GM12878 (cell line): ENCODE measurements at regions of chr11 and their contacts with region 1.

Region 1: GRCh38 chr11:118895142-118896039 is 11.7 kb downstream of the CXCR5 start:
- DNase-seq: peak; percentile 47
- ATAC-seq: peak; percentile 85
- H3K4me3 ChIP-seq: no peak overlapping the region
- H3K27ac ChIP-seq: no peak overlapping the region; the same call in 1 of the 2 replicates
- H3K4me1 ChIP-seq: peaks cover 44% of the 10 kb centered on the region
- H3K27me3 ChIP-seq: no peaks in the 10 kb centered on the region
- CTCF ChIP-seq: peak in 1 of 3 experiments; percentile 34; a peak in 2 of 6 replicates
- EP300 ChIP-seq: 0 out of 4 replicates have a peak, but pooled peaks of 1 of the 2 experiments have one; percentile 18
- POLR2A ChIP-seq: peak; percentile 34; the same call in 1 of the 2 replicates
- RAD21 ChIP-seq: peak; percentile 20; the same call in 1 of the 2 replicates

Region 2: GRCh38 chr11:118659314-118659952 is 236.0 kb before region 1 on chr11:
- CTCF ChIA-PET with region 1: no interaction called
- POLR2A ChIA-PET with region 1: no interaction called
- RAD21 ChIA-PET with region 1: no interaction called
- SMC1A ChIA-PET with region 1: no interaction called
- in situ Hi-C with region 1: no loop called
- intact Hi-C with region 1: no loop called
- DNase-seq: peak; percentile 2
- ATAC-seq: peak; percentile 98
- H3K4me3 ChIP-seq: no peak overlapping the region
- H3K27ac ChIP-seq: no peak overlapping the region
- H3K4me1 ChIP-seq: no peaks in the 10 kb centered on the region
- H3K27me3 ChIP-seq: peaks cover 0 to 4% of the 10 kb centered on the region in 2 experiments; a peak in 3 of 4 replicates
- CTCF ChIP-seq: peak; percentile 86 to 96 (median 94); a peak in 5 of 6 replicates
- EP300 ChIP-seq: no peak
- POLR2A ChIP-seq: no peak
- RAD21 ChIP-seq: peak; percentile 57

Region 3: GRCh38 chr11:118679483-118679882 is 215.9 kb before region 1 on chr11 and contains the start of gene TREH:
- CTCF ChIA-PET with region 1: no interaction called
- POLR2A ChIA-PET with region 1: no interaction called
- RAD21 ChIA-PET with region 1: no interaction called
- SMC1A ChIA-PET with region 1: no interaction called
- in situ Hi-C with region 1: no loop called
- intact Hi-C with region 1: no loop called
- DNase-seq: no peak
- ATAC-seq: no peak
- H3K4me3 ChIP-seq: no peak within 1 kb of the TSS
- H3K27ac ChIP-seq: no peak within 1 kb of the TSS
- H3K4me1 ChIP-seq: no peaks in the 10 kb centered on the region
- H3K27me3 ChIP-seq: 0 out of 4 replicates have a peak, but pooled peaks cover 0 to 1% of the 10 kb centered on the region in 2 experiments
- CTCF ChIP-seq: no peak
- EP300 ChIP-seq: no peak
- POLR2A ChIP-seq: no peak
- RAD21 ChIP-seq: no peak
- polyA plus RNA-seq, gene TREH: not detected

Region 4: GRCh38 chr11:118838905-118839553 is 56.4 kb before region 1 on chr11:
- CTCF ChIA-PET with region 1: interaction called, 4 read pairs
- POLR2A ChIA-PET with region 1: no interaction called
- RAD21 ChIA-PET with region 1: interaction called, 12 read pairs
- SMC1A ChIA-PET with region 1: interaction called, 10 read pairs
- in situ Hi-C with region 1: no loop called
- intact Hi-C with region 1: no loop called
- DNase-seq: peak; percentile 85
- ATAC-seq: peak; percentile 87
- H3K4me3 ChIP-seq: no peak overlapping the region; the same call in 1 of the 2 replicates
- H3K27ac ChIP-seq: peak overlapping the region; percentile 24; the same call in 1 of the 2 replicates
- H3K4me1 ChIP-seq: peaks cover 26% of the 10 kb centered on the region
- H3K27me3 ChIP-seq: no peaks in the 10 kb centered on the region
- CTCF ChIP-seq: no peak
- EP300 ChIP-seq: peak in 1 of 2 experiments; percentile 77; a peak in 2 of 4 replicates
- POLR2A ChIP-seq: no peak
- RAD21 ChIP-seq: peak; percentile 22; the same call in 1 of the 2 replicates

Region 5: GRCh38 chr11:118878163-118878563 is 17.2 kb before region 1 on chr11:
- CTCF ChIA-PET with region 1: interaction called, 12 read pairs
- POLR2A ChIA-PET with region 1: interaction called, 12 read pairs
- RAD21 ChIA-PET with region 1: interaction called, 24 read pairs
- SMC1A ChIA-PET with region 1: interaction called, 15 read pairs
- in situ Hi-C with region 1: no loop called
- intact Hi-C with region 1: no loop called
- DNase-seq: no peak
- ATAC-seq: no peak
- H3K4me3 ChIP-seq: no peak overlapping the region
- H3K27ac ChIP-seq: no peak overlapping the region
- H3K4me1 ChIP-seq: peaks cover 26% of the 10 kb centered on the region
- H3K27me3 ChIP-seq: peaks cover 4 to 7% of the 10 kb centered on the region in 2 experiments
- CTCF ChIP-seq: no peak
- EP300 ChIP-seq: no peak
- POLR2A ChIP-seq: no peak
- RAD21 ChIP-seq: no peak

Region 6: DNA sequence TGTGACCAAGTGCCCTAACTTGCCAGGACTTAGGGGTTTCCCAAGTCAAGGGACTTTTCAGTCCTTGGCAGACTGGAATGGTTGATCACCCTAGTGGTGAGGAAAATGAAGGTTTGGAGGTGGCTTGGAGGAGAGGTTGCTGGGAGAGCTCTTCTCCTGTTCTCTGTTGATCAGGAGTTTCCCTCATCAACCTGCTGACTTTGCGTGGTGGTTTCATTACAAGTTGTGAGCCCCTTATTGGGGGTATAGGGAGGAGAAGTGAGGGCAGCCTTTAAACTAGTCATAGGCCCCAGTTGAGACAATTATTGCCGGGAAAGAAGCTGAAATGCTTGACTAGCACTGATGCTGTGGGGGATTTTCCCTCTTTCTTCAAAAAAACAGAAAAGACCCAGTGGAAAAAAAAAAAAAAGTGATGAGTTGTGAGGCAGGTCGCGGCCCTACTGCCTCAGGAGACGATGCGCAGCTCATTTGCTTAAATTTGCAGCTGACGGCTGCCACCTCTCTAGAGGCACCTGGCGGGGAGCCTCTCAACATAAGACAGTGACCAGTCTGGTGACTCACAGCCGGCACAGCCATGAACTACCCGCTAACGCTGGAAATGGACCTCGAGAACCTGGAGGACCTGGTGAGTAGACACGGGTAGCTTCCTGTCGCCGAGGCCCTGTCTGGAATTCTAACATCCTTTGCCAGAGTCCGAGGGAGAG is 11.9 kb before region 1 on chr11 and contains the start of gene CXCR5:
- CTCF ChIA-PET with region 1: interaction called, 12 read pairs
- POLR2A ChIA-PET with region 1: interaction called, 17 read pairs
- RAD21 ChIA-PET with region 1: interaction called, 24 read pairs
- SMC1A ChIA-PET with region 1: interaction called, 15 read pairs
- in situ Hi-C with region 1: no loop called
- intact Hi-C with region 1: no loop called
- DNase-seq: no peak
- ATAC-seq: peak; percentile 81
- H3K4me3 ChIP-seq: peak within 1 kb of the TSS; percentile 13; the same call in 1 of the 2 replicates
- H3K27ac ChIP-seq: no peak within 1 kb of the TSS
- H3K4me1 ChIP-seq: peaks cover 43% of the 10 kb centered on the region
- H3K27me3 ChIP-seq: peaks cover 3 to 9% of the 10 kb centered on the region in 2 experiments; a peak in 2 of 4 replicates
- CTCF ChIP-seq: peak in 2 of 3 experiments; percentile 8 to 27; a peak in 2 of 6 replicates
- EP300 ChIP-seq: no peak
- POLR2A ChIP-seq: peak; percentile 58
- RAD21 ChIP-seq: peak; percentile 30; the same call in 1 of the 2 replicates
- polyA plus RNA-seq, gene CXCR5: 0.03 to 0.11 TPM

Region 7: DNA sequence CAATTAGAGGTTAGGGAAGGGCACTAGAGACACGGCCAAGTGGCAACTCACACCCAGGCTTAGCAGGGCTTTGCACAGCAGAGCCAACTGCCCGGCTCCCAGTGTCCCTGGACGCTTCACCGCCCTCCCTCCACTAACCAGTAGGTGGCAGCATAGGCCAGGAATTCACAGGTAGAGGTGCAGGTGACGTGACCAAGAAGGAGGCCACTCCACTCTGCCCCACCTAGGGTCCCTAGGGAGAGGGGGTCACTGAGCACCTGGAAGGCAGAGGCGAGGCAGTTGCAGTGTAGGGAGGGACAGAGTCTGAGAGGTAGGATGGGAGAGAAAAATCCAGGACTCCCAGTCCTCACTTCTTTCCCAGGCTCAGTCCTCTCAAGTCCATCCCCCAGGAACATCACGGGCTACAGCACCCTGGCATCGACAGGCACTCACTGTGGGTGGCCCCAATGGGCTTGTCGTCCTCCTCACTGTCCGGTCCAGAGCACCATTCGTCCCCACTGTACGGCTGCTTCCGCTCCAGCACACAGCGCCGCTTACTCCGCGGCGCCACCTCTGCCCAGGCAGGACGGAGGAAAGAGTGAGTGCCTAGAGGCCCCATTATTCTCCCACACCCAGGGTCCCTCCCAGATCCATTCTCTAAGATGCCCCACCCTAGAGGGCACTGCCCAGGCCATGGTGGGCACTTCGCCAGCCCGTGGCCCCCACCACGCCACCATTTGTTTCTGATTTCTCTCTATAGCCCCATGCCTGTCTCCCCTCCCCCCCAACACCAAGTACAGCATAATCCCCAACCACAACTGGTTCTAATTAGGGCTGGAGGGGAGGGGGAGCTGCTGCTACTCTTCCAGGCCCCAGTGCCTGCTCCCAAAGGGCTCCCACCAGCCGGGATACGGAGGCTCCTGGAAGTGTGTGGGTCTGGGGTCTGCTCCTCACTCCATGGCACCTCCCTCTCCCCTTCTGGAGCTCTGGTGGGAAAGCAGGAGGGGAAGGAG is 12.0 kb after region 1 on chr11:
- CTCF ChIA-PET with region 1: interaction called, 5 read pairs
- POLR2A ChIA-PET with region 1: interaction called, 4 read pairs
- RAD21 ChIA-PET with region 1: interaction called, 10 read pairs
- SMC1A ChIA-PET with region 1: interaction called, 5 read pairs
- in situ Hi-C with region 1: no loop called
- intact Hi-C with region 1: no loop called
- DNase-seq: peak; percentile 61
- ATAC-seq: peak; percentile 98
- H3K4me3 ChIP-seq: no peak overlapping the region
- H3K27ac ChIP-seq: no peak overlapping the region
- H3K4me1 ChIP-seq: peaks cover 10% of the 10 kb centered on the region
- H3K27me3 ChIP-seq: no peaks in the 10 kb centered on the region
- CTCF ChIP-seq: peak; percentile 89 to 99 (median 93); a peak in 5 of 6 replicates
- EP300 ChIP-seq: no peak
- POLR2A ChIP-seq: 0 out of 2 replicates have a peak, but pooled peaks have one; percentile 13
- RAD21 ChIP-seq: peak; percentile 98

Region 8: DNA sequence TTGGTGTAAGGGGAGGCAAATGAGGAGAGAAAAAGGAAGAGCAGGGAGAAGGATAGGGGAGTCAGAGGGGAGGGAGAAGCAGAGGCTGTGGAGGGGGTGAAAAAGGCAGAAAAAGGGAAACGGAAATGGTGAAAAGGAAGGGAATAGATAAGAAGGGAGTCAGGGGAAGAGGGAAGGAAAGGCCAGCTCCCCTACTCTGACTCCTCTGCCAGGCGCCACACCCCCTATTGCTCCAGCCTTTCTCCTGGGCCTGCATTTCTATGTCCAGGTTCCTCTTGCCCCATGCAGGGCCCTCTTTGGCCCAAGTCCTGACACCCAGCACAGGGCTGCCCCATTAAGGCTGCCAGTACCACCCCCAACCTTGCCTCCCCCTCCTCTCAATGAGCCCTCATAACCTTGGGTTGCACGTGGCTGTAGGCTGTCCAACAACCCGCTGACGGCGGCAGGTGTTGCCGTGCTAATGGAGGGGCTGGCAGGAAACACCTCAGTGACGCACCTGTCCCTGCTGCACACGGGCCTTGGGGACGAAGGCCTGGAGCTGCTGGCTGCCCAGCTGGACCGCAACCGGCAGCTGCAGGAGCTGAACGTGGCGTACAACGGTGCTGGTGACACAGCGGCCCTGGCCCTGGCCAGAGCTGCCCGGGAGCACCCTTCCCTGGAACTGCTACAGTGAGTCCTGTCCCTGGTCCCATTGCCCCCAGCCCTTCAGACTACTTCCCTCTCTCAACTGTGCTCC is 286.5 kb after region 1 on chr11:
- CTCF ChIA-PET with region 1: no interaction called
- POLR2A ChIA-PET with region 1: no interaction called
- RAD21 ChIA-PET with region 1: no interaction called
- SMC1A ChIA-PET with region 1: no interaction called
- in situ Hi-C with region 1: no loop called
- intact Hi-C with region 1: no loop called
- DNase-seq: no peak
- ATAC-seq: no peak
- H3K4me3 ChIP-seq: no peak overlapping the region
- H3K27ac ChIP-seq: no peak overlapping the region
- H3K4me1 ChIP-seq: no peaks in the 10 kb centered on the region
- H3K27me3 ChIP-seq: no peaks in the 10 kb centered on the region; a peak in 1 of 4 replicates
- CTCF ChIP-seq: no peak
- EP300 ChIP-seq: no peak
- POLR2A ChIP-seq: no peak
- RAD21 ChIP-seq: no peak